ENCODE measurements at regions of chrX and their contacts with region 1.

Region 1: DNA sequence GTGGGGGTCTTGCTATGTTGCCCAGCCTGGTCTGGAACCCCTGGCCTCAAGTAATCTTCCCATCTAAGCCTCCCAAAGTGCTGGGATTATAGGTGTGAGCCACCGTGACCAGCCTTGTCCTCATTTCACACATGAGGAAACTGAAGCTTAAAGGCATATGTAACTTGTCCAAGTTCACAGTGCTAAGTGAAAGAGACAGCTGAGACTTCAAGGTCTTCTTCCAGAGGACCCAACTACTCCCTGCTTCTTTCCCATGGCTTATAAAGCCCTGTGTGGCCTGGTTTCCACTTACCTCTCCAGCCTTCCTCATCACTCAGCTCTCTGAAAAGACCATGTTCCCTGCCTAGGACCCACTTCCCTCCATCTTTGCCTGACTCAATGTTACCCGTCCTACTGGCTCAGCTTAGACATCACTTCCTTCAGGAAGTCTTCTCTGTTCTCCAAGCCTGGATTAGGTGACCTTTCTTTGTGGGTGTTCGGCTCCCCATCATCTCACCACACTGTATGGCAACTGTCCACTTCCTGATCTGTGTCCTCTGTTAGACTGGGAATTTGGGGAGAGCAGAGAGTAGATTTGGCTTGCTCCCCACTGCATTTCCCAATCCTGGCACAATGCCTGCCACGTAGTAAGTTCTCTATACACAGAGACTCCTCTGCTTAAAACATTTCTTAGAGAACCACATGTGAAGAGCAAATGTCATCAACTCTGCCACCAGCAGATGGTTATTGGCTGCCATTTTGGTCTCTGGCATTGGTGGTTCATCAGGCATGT is 30.4 kb upstream of the LAMP2 start:
- DNase-seq: no peak
- H3K4me3 ChIP-seq: no peak overlapping the region
- H3K27ac ChIP-seq: no peak overlapping the region
- H3K4me1 ChIP-seq: no peaks in the 10 kb centered on the region
- H3K27me3 ChIP-seq: no peaks in the 10 kb centered on the region
- CTCF ChIP-seq: no peak
- EP300 ChIP-seq: no peak
- POLR2A ChIP-seq: no peak

Region 2: DNA sequence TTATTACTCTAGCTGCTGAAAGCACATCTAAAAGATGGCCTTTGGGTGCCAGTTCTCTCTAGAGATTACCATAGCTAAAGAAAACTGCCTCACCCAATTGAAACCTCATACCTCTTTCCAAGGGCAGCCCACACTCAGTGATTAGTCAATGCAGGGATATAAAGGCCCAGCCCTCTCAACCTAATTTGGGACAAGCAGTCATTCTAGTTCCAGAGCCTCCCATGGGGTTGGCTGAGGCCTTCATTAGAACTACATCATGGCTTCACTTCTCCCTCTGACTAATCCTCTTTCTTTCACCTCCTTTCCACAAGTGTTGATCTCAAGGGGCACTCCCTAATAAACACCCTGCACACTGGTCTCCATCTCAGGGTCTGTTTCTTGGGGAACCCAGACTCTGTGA is 168.9 kb after region 1 on chrX:
- intact Hi-C with region 1: loop called (anchors 5 kb)
- DNase-seq: no peak
- H3K4me3 ChIP-seq: no peak overlapping the region
- H3K27ac ChIP-seq: no peak overlapping the region
- H3K4me1 ChIP-seq: no peaks in the 10 kb centered on the region
- H3K27me3 ChIP-seq: no peaks in the 10 kb centered on the region
- CTCF ChIP-seq: no peak
- EP300 ChIP-seq: no peak
- POLR2A ChIP-seq: no peak

Region 3: DNA sequence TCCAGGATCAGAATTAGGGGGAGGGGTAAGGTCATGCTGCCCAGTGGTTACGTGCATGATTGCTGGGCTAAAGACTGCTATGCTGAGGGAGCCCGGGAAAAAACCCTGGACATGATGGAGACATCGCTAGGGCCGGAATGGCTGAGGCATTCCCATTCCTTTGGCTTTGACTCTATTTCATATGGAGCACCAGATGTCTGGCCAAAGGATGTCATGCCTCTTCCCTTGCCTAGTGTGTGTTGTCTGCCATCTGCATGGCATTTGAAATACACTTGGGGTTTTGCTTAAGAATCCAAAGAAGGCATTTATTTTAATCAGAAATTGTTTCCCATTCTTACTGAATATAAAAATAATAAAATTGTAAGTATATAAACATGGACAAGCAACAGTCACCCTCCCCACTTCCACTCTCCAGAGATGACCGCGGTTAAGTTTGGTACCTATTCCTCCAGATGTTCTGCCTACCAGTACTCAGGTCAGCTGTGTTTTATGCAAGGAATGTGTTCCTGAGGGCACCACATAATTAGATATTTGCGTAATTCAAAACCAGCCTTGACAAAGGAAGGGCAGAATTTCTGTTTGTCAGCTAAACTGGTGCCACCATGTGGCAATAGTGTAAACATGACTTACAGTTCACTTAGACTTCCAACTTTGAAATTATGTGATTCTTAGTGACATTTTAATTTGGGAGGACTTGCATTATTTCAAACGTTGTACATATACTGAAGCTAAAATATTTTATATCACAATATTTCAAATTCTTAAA is 270.3 kb after region 1 on chrX:
- intact Hi-C with region 1: loop called (anchors 10 kb)
- DNase-seq: no peak
- H3K4me3 ChIP-seq: no peak overlapping the region
- H3K27ac ChIP-seq: no peak overlapping the region
- H3K4me1 ChIP-seq: no peaks in the 10 kb centered on the region
- H3K27me3 ChIP-seq: no peaks in the 10 kb centered on the region
- CTCF ChIP-seq: no peak
- EP300 ChIP-seq: no peak
- POLR2A ChIP-seq: no peak

Measured in sigmoid colon (tissue), 7 donors.